ENCODE measurements at regions of chr9 and their contacts with region 1.

Region 1: DNA sequence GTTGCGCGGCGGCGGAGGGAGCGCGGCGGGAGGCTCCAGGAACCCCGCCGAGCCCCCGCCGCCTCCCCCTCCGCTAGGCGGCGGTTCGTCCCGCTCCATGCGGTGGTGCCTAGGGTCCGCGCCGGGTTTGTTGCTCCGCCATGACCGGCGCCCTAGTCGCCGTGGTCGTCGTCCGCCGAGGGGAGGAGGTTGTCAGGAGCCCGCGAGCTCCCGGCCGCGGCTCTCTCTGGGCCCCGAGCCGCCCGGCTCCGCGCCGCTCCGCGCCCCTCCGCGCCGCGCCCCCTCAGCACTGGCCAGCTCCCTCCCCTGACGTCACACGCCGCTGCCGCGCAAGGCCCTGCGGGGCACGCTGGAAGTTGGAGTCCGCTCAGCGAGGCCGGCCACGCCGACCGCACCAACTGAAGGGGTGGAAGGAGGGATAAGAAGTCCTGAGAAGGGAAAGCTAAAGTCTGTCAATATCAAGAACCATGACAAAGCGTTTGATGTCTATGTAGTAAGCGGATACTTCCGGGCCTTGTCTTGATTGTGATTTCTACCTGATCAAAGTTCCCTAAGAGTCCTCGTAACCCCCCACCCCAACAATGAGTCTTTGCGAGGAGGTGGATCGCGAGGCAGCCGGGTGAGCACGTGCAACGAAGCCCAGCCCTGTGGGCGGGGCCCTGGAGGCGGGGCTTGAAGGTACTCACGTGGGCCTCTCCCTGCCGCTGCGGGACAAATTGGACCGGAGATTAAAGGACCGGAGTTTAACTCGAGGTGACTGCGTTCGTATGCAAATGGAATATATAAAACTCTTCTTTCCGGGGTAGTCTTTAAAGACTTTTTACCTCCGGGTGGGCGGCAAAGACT is at the start of gene NR6A1:
- DNase-seq: peak; percentile 89 to 97
- H3K4me3 ChIP-seq: peak within 1 kb of the TSS; percentile 56 to 86 (median 78)
- H3K27ac ChIP-seq: peak within 1 kb of the TSS; percentile 97
- H3K4me1 ChIP-seq: peaks cover 2 to 13% (median 8%) of the 10 kb centered on the region in 4 experiments; a peak in 6 of 7 replicates
- H3K27me3 ChIP-seq: peaks cover 0 to 4% (median under 1%) of the 10 kb centered on the region in 4 experiments; a peak in 1 of 7 replicates
- CTCF ChIP-seq: no peak
- EP300 ChIP-seq: peak in 1 of 2 experiments; percentile 99; a peak in 2 of 3 replicates
- POLR2A ChIP-seq: peak in 1 of 2 experiments; percentile 76; a peak in 1 of 3 replicates
- RAD21 ChIP-seq: no peak
- total RNA-seq, gene NR6A1: 232 and 237 TPM in 2 replicates

Region 2: DNA sequence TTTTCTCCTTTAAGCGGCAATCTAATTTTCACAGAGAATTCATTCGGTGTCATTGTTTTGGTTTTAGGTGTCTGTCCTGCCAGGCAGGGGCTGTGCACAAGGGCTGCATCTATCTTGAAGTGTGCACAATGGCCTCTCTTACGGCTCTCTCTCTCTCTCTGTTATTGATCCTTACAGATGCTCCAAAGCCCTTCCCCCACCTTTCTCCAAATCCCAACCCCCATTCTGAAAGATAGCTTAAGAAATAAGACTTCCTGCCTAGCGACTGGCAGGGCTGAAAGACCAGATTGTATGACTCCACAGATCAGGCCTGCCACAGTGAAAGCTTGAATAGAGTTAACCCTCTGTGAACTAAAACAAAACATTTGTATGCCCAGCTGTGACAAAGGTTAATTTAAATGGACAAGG is 177.6 kb before region 1 on chr9:
- CTCF ChIA-PET with region 1: interaction called, 3 read pairs
- POLR2A ChIA-PET with region 1: interaction called, 11 read pairs
- DNase-seq: peak; percentile 59 to 71
- H3K4me3 ChIP-seq: peak overlapping the region; percentile 12 to 55 (median 28); a peak in 6 of 8 replicates
- H3K27ac ChIP-seq: peak overlapping the region; percentile 69
- H3K4me1 ChIP-seq: peaks cover 7 to 39% (median 29%) of the 10 kb centered on the region in 4 experiments
- H3K27me3 ChIP-seq: no peaks in the 10 kb centered on the region
- CTCF ChIP-seq: no peak
- EP300 ChIP-seq: peak in 1 of 2 experiments; percentile 91; a peak in 2 of 3 replicates
- POLR2A ChIP-seq: peak in 1 of 2 experiments; percentile 18; a peak in 2 of 3 replicates
- RAD21 ChIP-seq: peak in 1 of 2 experiments; percentile 20; a peak in 1 of 4 replicates

Region 3: GRCh38 chr9:124782661-124783574 is 11.7 kb after region 1 on chr9:
- CTCF ChIA-PET with region 1: interaction called, 281 read pairs
- POLR2A ChIA-PET with region 1: interaction called, 4 read pairs
- DNase-seq: peak in 1 of 2 experiments; percentile 48
- H3K4me3 ChIP-seq: no peak overlapping the region
- H3K27ac ChIP-seq: no peak overlapping the region
- H3K4me1 ChIP-seq: peaks cover 8 to 16% (median 13%) of the 10 kb centered on the region in 4 experiments
- H3K27me3 ChIP-seq: no peaks in the 10 kb centered on the region; a peak in 1 of 7 replicates
- CTCF ChIP-seq: no peak
- EP300 ChIP-seq: no peak
- POLR2A ChIP-seq: no peak
- RAD21 ChIP-seq: no peak; a peak in 1 of 4 replicates

Region 4: DNA sequence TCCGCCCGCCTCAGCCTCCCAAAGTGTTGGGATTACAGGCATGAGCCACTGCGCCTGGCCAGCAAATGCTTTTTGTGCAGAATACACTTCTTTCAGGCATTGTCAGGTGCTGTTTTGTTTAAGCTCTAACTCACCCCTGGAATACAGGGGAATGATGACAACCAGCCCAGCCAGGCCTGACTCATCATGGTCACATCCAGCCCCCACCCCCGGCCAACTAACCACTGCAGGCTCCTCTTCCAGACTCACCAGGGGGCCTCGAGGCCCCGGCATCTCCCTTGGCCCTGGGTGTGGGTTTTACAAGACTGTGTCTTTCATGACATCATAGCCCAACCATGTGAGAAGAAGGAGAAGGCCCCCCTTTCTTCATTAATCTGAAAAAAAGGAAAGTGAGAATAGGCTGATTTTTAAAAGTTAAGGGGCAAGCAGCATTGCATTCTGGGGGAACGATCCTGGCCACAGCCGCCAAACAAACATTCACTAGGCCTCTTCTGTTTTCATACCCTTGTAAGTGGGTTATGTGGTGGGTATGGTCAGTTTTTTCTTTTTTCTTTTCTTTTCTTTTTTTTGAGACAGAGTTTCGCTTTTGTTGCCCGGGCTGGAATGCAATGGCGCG is 41.3 kb after region 1 on chr9:
- CTCF ChIA-PET with region 1: interaction called, 174 read pairs
- POLR2A ChIA-PET with region 1: interaction called, 6 read pairs
- DNase-seq: peak in 1 of 2 experiments; percentile 64
- H3K4me3 ChIP-seq: no peak overlapping the region
- H3K27ac ChIP-seq: no peak overlapping the region
- H3K4me1 ChIP-seq: peaks cover 10 to 24% (median 16%) of the 10 kb centered on the region in 4 experiments
- H3K27me3 ChIP-seq: no peaks in the 10 kb centered on the region
- CTCF ChIP-seq: no peak
- EP300 ChIP-seq: no peak
- POLR2A ChIP-seq: no peak
- RAD21 ChIP-seq: no peak

Region 5: GRCh38 chr9:124861342-124862229 is 90.3 kb after region 1 on chr9 and contains the starts of genes ARPC5L and RPL35:
- CTCF ChIA-PET with region 1: interaction called, 1,300 read pairs
- POLR2A ChIA-PET with region 1: interaction called, 396 read pairs
- DNase-seq: peak in 1 of 2 experiments; percentile 94
- H3K4me3 ChIP-seq: peak within 1 kb of the TSS; percentile 86 to 97 (median 96)
- H3K27ac ChIP-seq: peak within 1 kb of the TSS; percentile 89
- H3K4me1 ChIP-seq: peaks cover 0 to 10% (median 8%) of the 10 kb centered on the region in 4 experiments; a peak in 5 of 7 replicates
- H3K27me3 ChIP-seq: no peaks in the 10 kb centered on the region
- CTCF ChIP-seq: peak in 1 of 3 experiments; percentile 36; a peak in 1 of 4 replicates
- EP300 ChIP-seq: peak in 1 of 2 experiments; percentile 99; a peak in 2 of 3 replicates
- POLR2A ChIP-seq: peak in 1 of 2 experiments; percentile 97; a peak in 2 of 3 replicates
- RAD21 ChIP-seq: no peak
- total RNA-seq, gene ARPC5L: 50.5 and 50.6 TPM in 2 replicates
- total RNA-seq, gene RPL35: 1,831 and 1,889 TPM in 2 replicates

Region 6: GRCh38 chr9:124894741-124895170 is 123.5 kb after region 1 on chr9:
- CTCF ChIA-PET with region 1: interaction called, 13 read pairs
- POLR2A ChIA-PET with region 1: no interaction called
- DNase-seq: no peak
- H3K4me3 ChIP-seq: no peak overlapping the region
- H3K27ac ChIP-seq: no peak overlapping the region
- H3K4me1 ChIP-seq: no peaks in the 10 kb centered on the region
- H3K27me3 ChIP-seq: no peaks in the 10 kb centered on the region
- CTCF ChIP-seq: peak in 2 of 3 experiments; percentile 60 to 67; a peak in 3 of 4 replicates
- EP300 ChIP-seq: no peak
- POLR2A ChIP-seq: no peak
- RAD21 ChIP-seq: peak; percentile 69 to 85